ENCODE measurements at regions of chr4 and their contacts with region 1.

Region 1: DNA sequence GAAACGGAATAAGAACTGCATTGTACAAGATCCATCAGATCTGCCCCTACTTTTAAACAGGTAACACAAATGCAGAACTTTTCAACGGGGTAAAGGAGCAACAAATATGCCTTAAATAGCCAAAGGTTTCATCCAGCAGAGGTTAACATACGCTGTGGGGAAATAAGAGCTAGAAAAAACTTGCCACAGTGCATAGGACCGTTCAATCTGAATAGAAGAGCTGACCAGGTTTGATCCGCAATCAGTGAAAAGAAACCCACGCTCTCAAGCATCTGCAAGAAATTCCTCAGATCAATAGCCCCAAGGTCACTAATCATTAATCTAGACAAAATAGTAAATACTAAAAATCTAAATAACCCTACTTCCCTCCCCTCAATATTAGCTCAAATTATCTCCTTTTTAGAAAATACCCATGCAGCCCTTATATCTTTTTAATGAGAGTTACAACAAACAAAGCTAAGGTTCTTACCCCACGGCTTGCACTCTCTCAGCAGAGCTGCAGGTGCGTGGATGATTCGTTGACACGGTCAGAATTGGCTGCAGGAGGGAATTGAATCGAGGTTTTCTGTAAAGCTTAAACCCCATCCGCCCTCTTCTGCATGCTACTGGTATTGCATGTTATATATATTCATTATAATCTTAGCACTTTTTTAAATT is at the start of gene TLR10:
- DNase-seq: peak; percentile 56
- H3K4me3 Mint-ChIP-seq: no peak within 1 kb of the TSS
- H3K27ac Mint-ChIP-seq: no peak within 1 kb of the TSS
- H3K4me1 Mint-ChIP-seq: no peaks in the 10 kb centered on the region
- H3K27me3 Mint-ChIP-seq: no peaks in the 10 kb centered on the region
- CTCF ChIP-seq: peak; percentile 54
- total RNA-seq, gene TLR10: not detected in 2 replicates

Region 2: GRCh38 chr4:38749336-38749735 is 33.2 kb before region 1 on chr4:
- CTCF ChIA-PET with region 1: no interaction called
- POLR2A ChIA-PET with region 1: no interaction called
- intact Hi-C with region 1: no loop called
- DNase-seq: no peak
- H3K4me3 Mint-ChIP-seq: no peak overlapping the region
- H3K27ac Mint-ChIP-seq: no peak overlapping the region
- H3K4me1 Mint-ChIP-seq: no peaks in the 10 kb centered on the region
- H3K27me3 Mint-ChIP-seq: no peaks in the 10 kb centered on the region
- CTCF ChIP-seq: no peak

Region 3: DNA sequence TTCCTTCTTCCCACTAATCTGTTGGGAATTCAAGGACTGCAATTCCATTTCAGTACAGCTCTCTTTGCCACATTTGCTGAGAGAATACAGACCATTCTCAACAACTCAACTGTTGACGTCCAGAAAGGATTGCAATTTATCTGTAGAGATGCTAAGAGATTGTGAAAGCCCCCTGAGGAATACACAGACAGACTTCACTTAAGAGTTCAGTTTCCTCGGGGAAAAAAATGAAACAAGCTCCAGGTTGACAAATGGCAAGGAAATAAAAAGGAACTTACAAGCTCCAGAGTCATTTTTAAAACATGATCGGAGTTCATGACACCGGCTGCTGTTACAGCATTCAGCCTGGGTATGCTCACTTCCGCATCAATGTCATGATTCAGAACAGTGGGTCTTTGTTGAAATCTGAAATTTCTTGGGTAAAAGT is 13.6 kb before region 1 on chr4:
- CTCF ChIA-PET with region 1: interaction called, 268 read pairs
- POLR2A ChIA-PET with region 1: interaction called, 3 read pairs
- intact Hi-C with region 1: no loop called
- DNase-seq: no peak
- H3K4me3 Mint-ChIP-seq: no peak overlapping the region
- H3K27ac Mint-ChIP-seq: no peak overlapping the region
- H3K4me1 Mint-ChIP-seq: no peaks in the 10 kb centered on the region
- H3K27me3 Mint-ChIP-seq: no peaks in the 10 kb centered on the region
- CTCF ChIP-seq: no peak

Region 4: DNA sequence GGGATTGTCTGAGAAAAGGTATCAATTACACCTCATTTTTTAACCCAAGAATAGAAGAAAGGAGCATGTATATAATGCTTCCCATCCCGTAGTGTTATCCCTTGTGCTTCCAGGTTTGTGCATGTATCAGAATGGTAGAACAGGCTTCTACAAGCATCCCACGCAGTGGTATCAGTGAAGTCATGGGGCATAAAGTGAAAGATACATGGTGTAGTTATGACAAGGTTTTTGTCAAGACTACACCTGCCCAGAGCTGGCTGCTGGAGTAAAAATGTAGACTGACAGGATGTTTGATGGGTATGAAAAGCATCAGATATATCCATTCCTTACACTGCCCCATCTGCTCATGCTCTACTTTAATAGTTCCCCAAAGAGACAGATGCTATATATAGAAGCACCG is 12.5 kb after region 1 on chr4:
- CTCF ChIA-PET with region 1: interaction called, 16 read pairs
- POLR2A ChIA-PET with region 1: interaction called, 3 read pairs
- intact Hi-C with region 1: no loop called
- DNase-seq: no peak
- H3K4me3 Mint-ChIP-seq: no peak overlapping the region
- H3K27ac Mint-ChIP-seq: no peak overlapping the region
- H3K4me1 Mint-ChIP-seq: no peaks in the 10 kb centered on the region
- H3K27me3 Mint-ChIP-seq: no peaks in the 10 kb centered on the region
- CTCF ChIP-seq: no peak

Region 5: GRCh38 chr4:38804654-38805295 is 22.2 kb after region 1 on chr4 and contains the start of gene TLR1:
- CTCF ChIA-PET with region 1: interaction called, 35 read pairs
- POLR2A ChIA-PET with region 1: interaction called, 4 read pairs
- intact Hi-C with region 1: no loop called
- DNase-seq: peak; percentile 70
- H3K4me3 Mint-ChIP-seq: peak within 1 kb of the TSS; percentile 70
- H3K27ac Mint-ChIP-seq: peak within 1 kb of the TSS; percentile 97
- H3K4me1 Mint-ChIP-seq: peaks cover 25% of the 10 kb centered on the region
- H3K27me3 Mint-ChIP-seq: no peaks in the 10 kb centered on the region
- CTCF ChIP-seq: peak; percentile 40
- total RNA-seq, gene TLR1: 1.9 and 2.2 TPM in 2 replicates

Measured in MCF 10A (cell line).